ENCODE measurements at regions of chr22 and their contacts with region 1.

Region 1: GRCh38 chr22:37316875-37317371 is 34.6 kb downstream of the CYTH4 start:
- DNase-seq: peak; percentile 92
- CTCF ChIP-seq: peak; percentile 99

Region 2: GRCh38 chr22:37154925-37155712 is 161.8 kb before region 1 on chr22:
- CTCF ChIA-PET with region 1: no interaction called
- POLR2A ChIA-PET with region 1: no interaction called
- DNase-seq: peak; percentile 42
- CTCF ChIP-seq: no peak

Region 3: DNA sequence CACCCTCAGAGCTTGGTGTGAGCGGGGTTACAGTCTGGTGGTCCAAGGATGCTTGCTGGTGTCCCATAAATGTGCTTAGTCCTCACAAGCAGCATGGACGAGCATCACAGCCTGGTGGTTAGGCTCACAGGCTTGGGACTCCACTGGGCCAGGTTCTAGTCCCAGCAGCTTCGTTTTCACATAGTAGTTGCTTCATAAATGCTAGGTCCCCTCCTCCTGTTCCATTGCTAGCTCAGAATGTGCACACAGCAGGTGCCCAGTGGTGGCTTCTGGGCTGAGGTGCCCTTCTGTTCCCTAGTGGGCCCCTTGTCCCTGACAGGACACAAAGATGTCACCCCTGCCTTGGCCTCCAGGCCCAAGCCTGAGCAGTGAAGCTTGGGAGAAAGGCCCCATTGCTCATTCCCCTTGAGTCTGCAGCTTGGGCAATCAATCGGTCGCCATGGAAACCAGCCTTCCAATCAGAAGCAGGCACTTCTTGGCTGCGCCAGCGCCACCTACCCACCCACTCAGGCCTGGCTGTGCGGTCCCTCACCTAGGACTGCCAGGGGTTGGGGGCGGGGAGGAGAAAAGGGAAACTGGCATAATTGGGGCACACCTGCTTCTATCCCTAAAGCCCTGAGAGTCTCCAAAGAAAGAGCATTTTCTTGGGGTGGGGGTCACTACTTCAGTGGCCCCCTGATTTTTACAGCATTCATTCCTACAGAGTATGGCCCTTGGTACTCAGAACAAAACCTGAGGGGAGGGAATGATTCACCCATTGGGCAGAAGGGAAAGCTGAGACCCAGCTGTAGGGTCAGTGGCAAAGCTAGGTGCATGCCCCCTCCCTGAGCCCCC is 13.5 kb after region 1 on chr22:
- CTCF ChIA-PET with region 1: interaction called, 53 read pairs
- POLR2A ChIA-PET with region 1: no interaction called
- DNase-seq: peak; percentile 75
- CTCF ChIP-seq: no peak

Region 4: DNA sequence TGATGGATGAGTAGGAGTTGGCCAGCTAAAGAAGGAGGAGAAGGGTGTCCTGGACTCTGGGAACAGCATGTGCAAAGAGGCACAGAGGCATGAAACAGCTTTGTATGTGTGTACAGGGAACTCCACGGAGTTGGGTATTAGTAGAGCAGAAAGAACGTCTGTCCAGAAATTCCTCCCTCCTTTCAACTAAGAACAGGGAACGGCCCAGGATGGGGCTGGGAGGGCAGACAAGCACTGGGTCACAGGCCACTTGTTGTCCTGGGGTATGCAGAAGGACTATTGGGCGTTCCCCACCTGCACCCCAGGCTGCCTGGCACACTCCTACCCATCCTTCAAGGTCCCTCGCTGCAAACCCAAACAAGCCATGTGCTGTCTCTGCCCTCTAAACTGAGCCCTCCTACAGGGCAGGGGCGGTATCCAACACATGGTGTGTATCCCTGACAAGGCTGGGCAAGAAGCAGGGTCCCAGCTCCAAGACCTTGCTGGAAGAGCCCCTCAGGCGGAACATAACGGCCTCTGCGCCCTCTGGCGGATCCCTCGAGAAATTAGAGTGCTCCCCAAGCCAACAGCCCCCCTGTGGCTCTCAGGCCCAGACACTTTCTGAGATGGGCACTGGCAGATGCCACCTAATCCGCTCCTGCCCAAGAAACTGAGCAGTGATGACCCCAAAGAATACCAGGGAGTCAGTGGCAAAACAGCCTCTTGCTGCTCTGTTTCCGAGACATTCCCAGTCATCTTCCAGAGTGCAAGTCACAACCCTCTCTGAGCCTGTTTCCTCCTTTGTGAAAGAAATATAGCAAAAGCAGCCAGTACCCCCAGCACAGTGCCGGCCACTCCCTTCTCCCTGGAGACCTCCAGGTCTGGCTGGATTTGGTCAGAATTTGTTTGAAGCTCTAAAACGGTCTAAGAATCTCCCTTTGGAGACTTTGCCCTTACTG is 112.0 kb after region 1 on chr22:
- CTCF ChIA-PET with region 1: interaction called, 77 read pairs
- POLR2A ChIA-PET with region 1: no interaction called
- DNase-seq: peak; percentile 78
- CTCF ChIP-seq: peak; percentile 81

Region 5: DNA sequence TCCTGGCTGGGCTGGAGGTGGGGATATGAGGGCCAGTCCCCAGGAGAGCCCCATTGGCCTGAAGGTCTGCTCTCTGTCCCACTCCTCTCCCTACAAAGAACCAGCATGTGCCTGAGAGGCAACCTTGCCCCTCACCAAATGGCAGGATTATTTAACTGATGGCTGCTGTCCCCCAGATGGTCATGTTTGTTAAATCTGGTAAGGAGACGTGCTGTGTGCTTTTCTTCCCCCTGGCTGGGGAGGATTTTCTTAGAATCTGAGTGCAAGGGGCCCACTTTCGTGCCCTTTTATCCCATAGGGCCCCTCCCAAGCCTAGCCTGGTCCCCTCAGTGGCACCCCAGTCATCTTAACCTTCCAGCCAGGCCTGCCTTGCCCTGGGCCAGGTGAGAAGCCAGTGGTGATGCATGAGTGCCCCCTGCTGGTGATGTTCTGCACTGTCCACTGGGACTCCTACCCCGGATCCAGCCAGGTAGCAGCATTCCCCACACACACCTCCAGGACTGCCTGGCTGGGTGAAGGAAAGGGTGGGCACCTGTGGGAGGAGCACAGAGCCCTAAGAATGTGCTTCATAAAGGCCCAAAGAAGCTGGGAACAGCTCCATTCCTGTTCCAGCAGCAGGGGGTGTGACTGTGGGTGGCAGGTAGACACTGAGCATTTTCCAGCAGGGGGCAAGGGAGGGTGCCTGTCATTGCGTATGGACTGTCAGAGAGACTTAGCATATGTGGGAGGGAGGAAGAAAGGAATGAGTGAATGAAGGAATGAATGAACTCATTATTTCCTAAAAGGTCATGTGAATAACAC is 140.4 kb after region 1 on chr22:
- CTCF ChIA-PET with region 1: interaction called, 68 read pairs
- POLR2A ChIA-PET with region 1: interaction called, 3 read pairs
- DNase-seq: peak; percentile 87
- CTCF ChIP-seq: peak; percentile 76